ENCODE measurements at regions of chr22 and their contacts with region 1.

Region 1: DNA sequence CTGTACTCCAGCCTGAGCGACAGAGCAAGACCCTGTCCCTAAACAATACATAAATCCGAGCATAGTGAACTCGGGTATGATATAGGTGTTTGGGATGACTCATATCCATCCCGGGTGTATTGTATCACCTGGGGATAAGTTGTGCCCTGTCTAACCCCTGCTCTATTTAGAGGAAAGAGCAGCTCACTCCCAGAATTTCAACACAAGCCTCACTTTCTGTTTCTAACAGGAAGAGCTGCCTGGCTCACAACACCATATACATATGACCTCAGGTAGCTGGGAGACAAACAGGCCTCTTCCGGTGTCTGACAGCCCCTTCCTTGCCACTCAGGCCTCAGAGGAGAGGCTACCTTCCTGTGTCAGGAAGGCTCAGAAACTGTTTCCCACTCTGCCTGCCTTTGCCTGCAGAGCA is 9.9 kb upstream of the MICALL1 start:
- DNase-seq: peak; percentile 60
- ATAC-seq: peak; percentile 98
- H3K4me3 ChIP-seq: no peak overlapping the region
- H3K27ac ChIP-seq: peak overlapping the region; percentile 89
- H3K4me1 ChIP-seq: peaks cover 11% of the 10 kb centered on the region
- H3K27me3 ChIP-seq: no peaks in the 10 kb centered on the region
- CTCF ChIP-seq: no peak
- EP300 ChIP-seq: no peak
- POLR2A ChIP-seq: peak; percentile 70
- RAD21 ChIP-seq: no peak

Region 2: GRCh38 chr22:37726241-37726887 is 169.8 kb before region 1 on chr22:
- CTCF ChIA-PET with region 1: no interaction called
- POLR2A ChIA-PET with region 1: no interaction called
- RAD21 ChIA-PET with region 1: no interaction called
- SMC1A ChIA-PET with region 1: no interaction called
- in situ Hi-C with region 1: no loop called
- intact Hi-C with region 1: no loop called
- DNase-seq: no peak
- ATAC-seq: peak; percentile 75
- H3K4me3 ChIP-seq: no peak overlapping the region
- H3K27ac ChIP-seq: no peak overlapping the region
- H3K4me1 ChIP-seq: no peaks in the 10 kb centered on the region
- H3K27me3 ChIP-seq: no peaks in the 10 kb centered on the region
- CTCF ChIP-seq: peak in 2 of 3 experiments; percentile 18 to 43; a peak in 1 of 6 replicates
- EP300 ChIP-seq: no peak
- POLR2A ChIP-seq: no peak
- RAD21 ChIP-seq: peak; percentile 18; the same call in 1 of the 2 replicates

Region 3: DNA sequence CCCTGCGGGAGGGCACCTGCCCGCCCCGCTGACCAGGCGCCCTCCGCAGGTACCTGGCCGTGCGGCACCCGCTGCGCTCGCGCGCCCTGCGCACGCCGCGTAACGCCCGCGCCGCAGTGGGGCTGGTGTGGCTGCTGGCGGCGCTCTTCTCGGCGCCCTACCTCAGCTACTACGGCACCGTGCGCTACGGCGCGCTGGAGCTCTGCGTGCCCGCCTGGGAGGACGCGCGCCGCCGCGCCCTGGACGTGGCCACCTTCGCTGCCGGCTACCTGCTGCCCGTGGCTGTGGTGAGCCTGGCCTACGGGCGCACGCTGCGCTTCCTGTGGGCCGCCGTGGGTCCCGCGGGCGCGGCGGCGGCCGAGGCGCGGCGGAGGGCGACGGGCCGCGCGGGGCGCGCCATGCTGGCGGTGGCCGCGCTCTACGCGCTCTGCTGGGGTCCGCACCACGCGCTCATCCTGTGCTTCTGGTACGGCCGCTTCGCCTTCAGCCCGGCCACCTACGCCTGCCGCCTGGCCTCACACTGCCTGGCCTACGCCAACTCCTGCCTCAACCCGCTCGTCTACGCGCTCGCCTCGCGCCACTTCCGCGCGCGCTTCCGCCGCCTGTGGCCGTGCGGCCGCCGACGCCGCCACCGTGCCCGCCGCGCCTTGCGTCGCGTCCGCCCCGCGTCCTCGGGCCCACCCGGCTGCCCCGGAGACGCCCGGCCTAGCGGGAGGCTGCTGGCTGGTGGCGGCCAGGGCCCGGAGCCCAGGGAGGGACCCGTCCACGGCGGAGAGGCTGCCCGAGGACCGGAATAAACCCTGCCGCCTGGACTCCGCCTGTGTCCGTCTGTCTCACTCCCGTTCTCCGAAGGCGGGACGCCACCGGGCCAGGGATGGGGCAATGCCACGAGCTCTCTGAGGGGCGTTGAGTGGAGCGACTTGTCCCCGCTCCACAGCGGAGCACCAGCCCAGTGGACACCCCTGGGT is 71.2 kb before region 1 on chr22:
- CTCF ChIA-PET with region 1: no interaction called
- POLR2A ChIA-PET with region 1: no interaction called
- RAD21 ChIA-PET with region 1: no interaction called
- SMC1A ChIA-PET with region 1: no interaction called
- in situ Hi-C with region 1: no loop called
- intact Hi-C with region 1: no loop called
- DNase-seq: no peak
- ATAC-seq: no peak
- H3K4me3 ChIP-seq: no peak overlapping the region
- H3K27ac ChIP-seq: no peak overlapping the region
- H3K4me1 ChIP-seq: no peaks in the 10 kb centered on the region
- H3K27me3 ChIP-seq: no peaks in the 10 kb centered on the region
- CTCF ChIP-seq: no peak
- EP300 ChIP-seq: no peak
- POLR2A ChIP-seq: no peak
- RAD21 ChIP-seq: no peak

Region 4: DNA sequence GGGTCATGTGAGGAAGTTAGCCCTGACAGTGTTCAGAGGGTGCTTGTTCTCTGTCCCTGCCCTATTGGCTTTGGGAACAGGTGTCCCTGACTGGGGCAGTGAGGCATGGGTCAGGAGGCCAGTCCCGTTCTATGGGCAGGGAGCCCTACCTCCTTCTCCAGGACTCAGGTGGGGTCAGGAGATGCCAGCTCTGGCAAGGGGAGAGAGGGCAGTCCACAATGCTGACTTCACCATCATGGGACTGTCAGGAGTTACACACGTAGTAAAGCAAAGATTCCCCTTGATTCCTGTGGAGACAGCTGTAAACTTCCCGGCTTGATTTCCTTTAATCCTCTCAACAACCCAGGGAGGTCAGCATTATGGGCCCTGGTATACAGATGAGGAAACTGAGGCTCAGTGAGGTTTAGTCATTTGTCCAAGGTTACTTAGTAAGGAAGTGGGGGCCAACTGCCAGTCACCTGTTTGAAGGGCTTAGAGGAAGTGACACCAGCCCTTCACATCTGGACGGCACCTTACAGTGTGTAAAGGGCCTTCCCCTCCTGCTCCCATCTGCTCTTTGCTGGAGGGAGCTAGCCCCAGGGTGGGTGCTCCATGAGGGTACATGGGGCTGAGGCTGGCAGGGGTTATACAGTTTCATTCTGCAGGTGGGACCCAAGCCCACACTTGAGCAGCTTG is 21.8 kb after region 1 on chr22:
- CTCF ChIA-PET with region 1: no interaction called
- POLR2A ChIA-PET with region 1: no interaction called
- RAD21 ChIA-PET with region 1: no interaction called
- SMC1A ChIA-PET with region 1: no interaction called
- in situ Hi-C with region 1: no loop called
- intact Hi-C with region 1: no loop called
- DNase-seq: no peak
- ATAC-seq: peak; percentile 68
- H3K4me3 ChIP-seq: no peak overlapping the region
- H3K27ac ChIP-seq: no peak overlapping the region
- H3K4me1 ChIP-seq: no peaks in the 10 kb centered on the region
- H3K27me3 ChIP-seq: no peaks in the 10 kb centered on the region
- CTCF ChIP-seq: no peak
- EP300 ChIP-seq: no peak
- POLR2A ChIP-seq: no peak
- RAD21 ChIP-seq: no peak

Region 5: GRCh38 chr22:38097557-38098409 is 201.6 kb after region 1 on chr22:
- CTCF ChIA-PET with region 1: interaction called, 3 read pairs
- POLR2A ChIA-PET with region 1: interaction called, 10 read pairs
- RAD21 ChIA-PET with region 1: no interaction called
- SMC1A ChIA-PET with region 1: no interaction called
- in situ Hi-C with region 1: no loop called
- intact Hi-C with region 1: no loop called
- DNase-seq: no peak
- ATAC-seq: peak; percentile 32; the same call in 2 of the 3 replicates
- H3K4me3 ChIP-seq: no peak overlapping the region
- H3K27ac ChIP-seq: no peak overlapping the region
- H3K4me1 ChIP-seq: no peaks in the 10 kb centered on the region
- H3K27me3 ChIP-seq: no peaks in the 10 kb centered on the region
- CTCF ChIP-seq: peak; percentile 6 to 38 (median 27); a peak in 3 of 6 replicates
- EP300 ChIP-seq: no peak
- POLR2A ChIP-seq: no peak
- RAD21 ChIP-seq: no peak

Measured in GM12878 (cell line).